HEK293T (cell line): ENCODE measurements at regions of chr5 and their contacts with region 1.

Region 1: GRCh38 chr5:178232124-178232919 is at the start of gene PHYKPL:
- DNase-seq: peak; percentile 86

Region 2: DNA sequence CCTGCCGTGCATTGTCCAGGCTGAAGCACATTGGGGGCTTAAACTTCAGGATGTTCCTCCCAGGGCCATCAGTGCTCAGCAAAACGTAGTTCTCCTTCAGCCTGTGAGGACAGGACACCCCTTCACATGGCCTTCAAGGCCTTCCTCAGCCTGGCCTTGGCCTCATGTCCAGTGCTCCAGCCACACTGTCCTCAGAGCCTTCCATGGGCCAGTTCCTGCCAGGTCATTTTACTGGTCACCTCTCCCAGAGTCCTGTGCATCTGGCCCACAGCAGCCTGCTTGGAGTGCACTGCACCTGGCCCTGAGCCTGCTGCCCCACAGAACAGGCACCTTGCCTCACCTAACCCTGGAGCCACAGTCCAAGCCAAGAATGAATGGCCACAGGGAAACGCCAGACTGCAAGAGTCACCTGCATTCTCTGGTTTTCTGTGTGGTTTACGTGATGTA is 19.3 kb before region 1 on chr5:
- CTCF ChIA-PET with region 1: interaction called, 4 read pairs
- POLR2A ChIA-PET with region 1: interaction called, 17 read pairs
- DNase-seq: no peak

Region 3: DNA sequence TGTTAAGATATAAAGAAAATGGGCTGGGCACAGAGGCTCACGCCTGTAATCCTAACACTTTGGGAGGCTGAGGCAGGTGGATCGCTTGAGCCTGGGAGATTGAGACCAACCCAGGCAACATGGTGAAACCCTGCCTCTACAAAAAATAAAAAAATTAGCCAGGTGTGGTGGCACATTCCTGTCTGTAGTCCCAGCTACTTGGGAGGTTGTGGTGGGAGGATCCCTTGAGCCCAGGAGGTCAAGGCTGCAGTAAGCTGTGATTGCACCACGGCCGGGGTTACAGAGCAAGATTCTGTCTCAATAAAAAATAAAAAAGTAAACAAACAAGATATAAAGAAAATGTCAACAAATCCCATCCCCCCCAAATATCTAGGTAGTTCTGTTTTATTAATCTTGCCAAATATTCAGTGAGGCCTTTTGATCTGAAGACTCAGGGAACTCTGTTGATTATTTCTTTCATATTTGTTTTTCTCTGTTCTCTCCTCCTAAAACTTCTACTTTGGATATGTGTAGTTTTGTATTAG is 211.6 kb after region 1 on chr5:
- CTCF ChIA-PET with region 1: no interaction called
- POLR2A ChIA-PET with region 1: no interaction called
- DNase-seq: no peak